Caco-2 (cell line): ENCODE measurements at regions of chr12 and their contacts with region 1.

Region 1: GRCh38 chr12:123436017-123436964 is at the start of gene RILPL2:
- DNase-seq: peak; percentile 78 to 86
- H3K4me3 ChIP-seq: peak within 1 kb of the TSS; percentile 86
- H3K4me3 Mint-ChIP-seq: peak within 1 kb of the TSS; percentile 92
- H3K27ac Mint-ChIP-seq: peak within 1 kb of the TSS; percentile 89
- H3K4me1 ChIP-seq: no peaks in the 10 kb centered on the region
- H3K4me1 Mint-ChIP-seq: no peaks in the 10 kb centered on the region
- H3K27me3 ChIP-seq: no peaks in the 10 kb centered on the region
- H3K27me3 Mint-ChIP-seq: no peaks in the 10 kb centered on the region
- CTCF ChIP-seq: peak in 1 of 2 experiments; percentile 16
- total RNA-seq, gene RILPL2: 3.1 and 3.2 TPM in 2 replicates

Region 2: GRCh38 chr12:123410041-123410412 is 26.3 kb before region 1 on chr12:
- CTCF ChIA-PET with region 1: no interaction called
- POLR2A ChIA-PET with region 1: no interaction called
- intact Hi-C with region 1: loop called (anchors 1 kb)
- DNase-seq: no peak
- H3K4me3 ChIP-seq: no peak overlapping the region
- H3K4me3 Mint-ChIP-seq: no peak overlapping the region
- H3K27ac Mint-ChIP-seq: no peak overlapping the region
- H3K4me1 ChIP-seq: no peaks in the 10 kb centered on the region
- H3K4me1 Mint-ChIP-seq: no peaks in the 10 kb centered on the region
- H3K27me3 ChIP-seq: no peaks in the 10 kb centered on the region
- H3K27me3 Mint-ChIP-seq: no peaks in the 10 kb centered on the region
- CTCF ChIP-seq: no peak

Region 3: GRCh38 chr12:123453165-123453564 is 16.9 kb after region 1 on chr12:
- CTCF ChIA-PET with region 1: no interaction called
- POLR2A ChIA-PET with region 1: interaction called, 13 read pairs
- intact Hi-C with region 1: loop called (anchors 1 kb)
- DNase-seq: no peak
- H3K4me3 ChIP-seq: no peak overlapping the region
- H3K4me3 Mint-ChIP-seq: no peak overlapping the region
- H3K27ac Mint-ChIP-seq: no peak overlapping the region
- H3K4me1 ChIP-seq: 0 out of 2 replicates have a peak, but pooled peaks cover 4% of the 10 kb centered on the region
- H3K4me1 Mint-ChIP-seq: peaks cover 5% of the 10 kb centered on the region
- H3K27me3 ChIP-seq: no peaks in the 10 kb centered on the region
- H3K27me3 Mint-ChIP-seq: no peaks in the 10 kb centered on the region
- CTCF ChIP-seq: no peak

Region 4: DNA sequence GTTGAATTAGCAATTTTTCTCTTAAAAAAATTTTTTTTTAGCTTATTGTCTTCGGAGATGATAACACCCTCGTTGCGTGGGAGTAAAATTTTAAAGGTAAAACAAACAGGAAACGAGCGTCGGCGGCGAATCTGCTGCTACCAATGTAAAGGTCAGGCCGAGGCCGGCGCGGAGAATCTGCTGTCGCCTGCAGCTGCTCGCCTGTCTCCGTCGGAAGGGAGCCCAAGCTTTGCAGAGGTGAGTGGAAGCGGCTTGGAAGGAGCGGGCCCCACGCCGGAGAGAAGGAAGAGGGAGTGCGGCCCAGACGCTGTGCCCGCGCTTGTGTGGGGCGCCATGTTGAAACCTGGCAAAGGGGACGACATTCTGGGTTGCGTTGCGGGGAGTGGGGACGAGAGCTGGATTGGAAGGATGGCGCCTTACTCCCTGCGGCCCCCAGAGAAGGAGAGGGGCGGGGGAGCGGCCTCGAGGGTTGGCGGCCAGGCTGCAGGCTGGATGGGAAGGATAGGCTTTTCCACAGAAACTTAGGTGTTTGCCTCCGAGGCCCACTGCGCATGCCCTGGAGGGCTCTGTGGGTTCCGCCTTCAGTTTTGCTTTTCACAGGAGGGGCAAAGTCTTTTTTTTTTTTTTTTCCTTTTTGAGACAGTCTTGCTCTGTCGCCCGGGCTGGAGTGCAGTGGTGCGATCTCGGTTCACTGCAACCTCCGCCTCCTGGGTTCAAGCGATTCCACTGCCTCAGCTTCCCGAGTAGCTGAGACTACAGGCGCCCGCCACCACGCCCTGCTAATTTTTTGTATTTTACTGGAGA is 21.9 kb after region 1 on chr12 and contains the start of gene SNRNP35:
- CTCF ChIA-PET with region 1: no interaction called
- POLR2A ChIA-PET with region 1: no interaction called
- intact Hi-C with region 1: loop called (anchors 1 kb)
- DNase-seq: peak; percentile 89 to 92
- H3K4me3 ChIP-seq: peak within 1 kb of the TSS; percentile 85
- H3K4me3 Mint-ChIP-seq: peak within 1 kb of the TSS; percentile 98
- H3K27ac Mint-ChIP-seq: peak within 1 kb of the TSS; percentile 100
- H3K4me1 ChIP-seq: no peaks in the 10 kb centered on the region
- H3K4me1 Mint-ChIP-seq: peaks cover 6% of the 10 kb centered on the region
- H3K27me3 ChIP-seq: no peaks in the 10 kb centered on the region
- H3K27me3 Mint-ChIP-seq: no peaks in the 10 kb centered on the region
- CTCF ChIP-seq: no peak
- total RNA-seq, gene SNRNP35: 22.0 and 22.7 TPM in 2 replicates